ENCODE measurements at regions of chr19 and their contacts with region 1.

Region 1: GRCh38 chr19:14117668-14118164 is at the start of gene PRKACA:
- DNase-seq: peak; percentile 98
- ATAC-seq: peak; percentile 93
- H3K4me3 ChIP-seq: peak within 1 kb of the TSS; percentile 54 to 74 (median 66)
- H3K4me3 Mint-ChIP-seq: peak within 1 kb of the TSS; percentile 94
- H3K27ac ChIP-seq: peak within 1 kb of the TSS; percentile 24 to 77
- H3K27ac Mint-ChIP-seq: peak within 1 kb of the TSS; percentile 87
- H3K4me1 ChIP-seq: peaks cover 36 to 38% of the 10 kb centered on the region in 2 donors
- H3K4me1 Mint-ChIP-seq: peaks cover 39% of the 10 kb centered on the region
- H3K27me3 ChIP-seq: no peaks in the 10 kb centered on the region
- H3K27me3 Mint-ChIP-seq: no peaks in the 10 kb centered on the region
- CTCF ChIP-seq: no peak
- total RNA-seq, gene PRKACA: 43.0 and 48.8 TPM in 2 replicates

Region 2: GRCh38 chr19:13952154-13953035 is 165.3 kb before region 1 on chr19 and contains the start of gene DCAF15:
- CTCF ChIA-PET with region 1: no interaction called
- POLR2A ChIA-PET with region 1: no interaction called
- intact Hi-C with region 1: loop called (anchors 1 kb)
- DNase-seq: peak; percentile 100
- ATAC-seq: peak; percentile 95
- H3K4me3 ChIP-seq: peak within 1 kb of the TSS; percentile 55 to 98 (median 76)
- H3K4me3 Mint-ChIP-seq: peak within 1 kb of the TSS; percentile 96
- H3K27ac ChIP-seq: peak within 1 kb of the TSS; percentile 34 to 85
- H3K27ac Mint-ChIP-seq: peak within 1 kb of the TSS; percentile 96
- H3K4me1 ChIP-seq: peaks cover 15 to 18% of the 10 kb centered on the region in 2 donors
- H3K4me1 Mint-ChIP-seq: peaks cover 21% of the 10 kb centered on the region
- H3K27me3 ChIP-seq: no peaks in the 10 kb centered on the region
- H3K27me3 Mint-ChIP-seq: no peaks in the 10 kb centered on the region
- CTCF ChIP-seq: no peak
- total RNA-seq, gene DCAF15: 115 and 116 TPM in 2 replicates

Region 3: DNA sequence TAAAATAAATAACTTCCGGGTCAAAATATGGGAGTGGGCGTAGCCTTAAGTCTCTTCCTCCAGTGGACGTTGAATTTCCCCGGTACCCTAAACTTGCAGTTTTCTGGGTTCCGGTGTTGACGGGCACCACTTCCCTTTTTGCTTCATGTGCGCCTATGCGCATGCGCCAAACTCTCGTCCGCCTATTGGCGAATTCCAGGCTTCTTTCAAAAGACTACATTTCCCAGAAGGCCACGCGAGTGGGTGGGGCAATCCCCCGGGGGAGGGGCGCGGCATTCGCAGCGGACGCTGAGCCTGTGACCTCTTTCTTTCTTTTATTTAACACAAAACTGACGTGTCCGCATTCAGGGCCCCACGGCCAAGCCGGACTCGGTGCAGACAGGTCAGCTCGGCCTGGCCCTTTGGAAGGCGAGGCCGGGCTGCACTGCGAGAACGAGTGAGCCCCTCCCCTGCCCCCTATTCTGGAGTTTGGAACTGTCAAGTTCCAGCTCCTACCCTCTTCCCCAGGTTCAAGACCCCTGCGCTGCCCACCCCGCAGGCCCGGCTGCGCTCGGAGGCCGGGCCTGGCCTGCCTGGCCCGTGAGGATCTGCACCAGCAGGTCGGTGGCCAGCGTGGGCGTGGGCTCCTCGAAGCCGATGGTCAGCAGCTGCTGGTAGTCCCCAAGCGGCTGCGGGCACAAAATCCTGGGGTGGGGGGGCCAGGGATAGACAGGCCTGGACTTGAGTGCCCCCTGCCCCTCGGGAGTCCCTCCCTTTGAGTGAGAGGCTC is 36.2 kb before region 1 on chr19:
- CTCF ChIA-PET with region 1: interaction called, 3 read pairs
- POLR2A ChIA-PET with region 1: interaction called, 6 read pairs
- intact Hi-C with region 1: loop called (anchors 1 kb)
- DNase-seq: peak; percentile 99
- ATAC-seq: peak; percentile 91
- H3K4me3 ChIP-seq: peak overlapping the region; percentile 65 to 89 (median 77)
- H3K4me3 Mint-ChIP-seq: peak overlapping the region; percentile 96
- H3K27ac ChIP-seq: peak overlapping the region; percentile 72 to 89
- H3K27ac Mint-ChIP-seq: peak overlapping the region; percentile 96
- H3K4me1 ChIP-seq: peaks cover 14 to 18% of the 10 kb centered on the region in 2 donors
- H3K4me1 Mint-ChIP-seq: peaks cover 12% of the 10 kb centered on the region
- H3K27me3 ChIP-seq: no peaks in the 10 kb centered on the region
- H3K27me3 Mint-ChIP-seq: no peaks in the 10 kb centered on the region
- CTCF ChIP-seq: peak; percentile 10

Region 4: DNA sequence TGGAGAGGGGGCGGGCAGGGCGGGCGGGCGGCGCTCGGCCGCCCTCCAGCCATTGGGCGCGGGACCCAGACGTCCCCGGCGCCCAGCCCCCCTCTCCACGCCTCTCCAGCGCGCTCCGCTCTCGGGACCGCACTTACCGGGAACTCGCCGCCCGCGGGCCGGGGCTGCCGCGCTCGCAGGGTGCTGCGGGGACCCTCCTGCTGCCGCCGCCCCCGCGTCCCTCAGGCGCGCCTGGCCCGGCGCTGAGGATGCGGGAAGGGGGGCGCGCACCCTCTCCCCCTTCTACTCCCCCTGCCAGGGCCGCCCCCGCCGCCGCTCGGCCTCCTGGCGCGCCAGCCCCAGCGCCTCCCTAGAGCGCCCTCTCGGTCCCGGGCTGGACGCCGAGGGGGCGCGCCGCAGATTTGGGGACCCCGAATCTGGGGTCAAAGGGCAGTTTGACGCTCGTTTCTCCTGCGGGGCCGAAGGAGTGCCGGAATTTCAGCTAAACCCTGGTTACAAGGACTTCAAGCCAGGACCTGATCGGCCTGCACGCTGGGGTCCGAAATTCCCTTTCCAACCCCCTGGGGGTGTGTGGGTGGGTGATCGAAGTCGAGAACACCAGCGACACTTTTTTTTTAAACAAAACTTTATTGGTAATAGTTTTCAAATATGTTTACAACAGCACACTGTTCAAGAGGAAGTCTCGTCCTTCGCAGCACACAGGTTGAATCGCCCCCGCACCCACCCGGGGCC is 26.5 kb before region 1 on chr19:
- CTCF ChIA-PET with region 1: interaction called, 4 read pairs
- POLR2A ChIA-PET with region 1: interaction called, 5 read pairs
- intact Hi-C with region 1: loop called (anchors 1 kb)
- DNase-seq: peak; percentile 89
- ATAC-seq: peak; percentile 72
- H3K4me3 ChIP-seq: peak overlapping the region; percentile 81 to 89 (median 82)
- H3K4me3 Mint-ChIP-seq: peak overlapping the region; percentile 100
- H3K27ac ChIP-seq: peak overlapping the region; percentile 69 to 87
- H3K27ac Mint-ChIP-seq: peak overlapping the region; percentile 99
- H3K4me1 ChIP-seq: peaks cover 11 to 18% of the 10 kb centered on the region in 2 donors
- H3K4me1 Mint-ChIP-seq: peaks cover 15% of the 10 kb centered on the region
- H3K27me3 ChIP-seq: no peaks in the 10 kb centered on the region
- H3K27me3 Mint-ChIP-seq: no peaks in the 10 kb centered on the region
- CTCF ChIP-seq: peak; percentile 21

Region 5: GRCh38 chr19:14237014-14237941 is 119.6 kb after region 1 on chr19:
- CTCF ChIA-PET with region 1: no interaction called
- POLR2A ChIA-PET with region 1: no interaction called
- intact Hi-C with region 1: no loop called
- DNase-seq: no peak
- ATAC-seq: no peak
- H3K4me3 ChIP-seq: no peak overlapping the region
- H3K4me3 Mint-ChIP-seq: no peak overlapping the region
- H3K27ac ChIP-seq: no peak overlapping the region
- H3K27ac Mint-ChIP-seq: no peak overlapping the region
- H3K4me1 ChIP-seq: no peaks in the 10 kb centered on the region
- H3K4me1 Mint-ChIP-seq: no peaks in the 10 kb centered on the region
- H3K27me3 ChIP-seq: no peaks in the 10 kb centered on the region
- H3K27me3 Mint-ChIP-seq: no peaks in the 10 kb centered on the region
- CTCF ChIP-seq: no peak

Region 6: GRCh38 chr19:14432791-14433553 is 315.3 kb after region 1 on chr19 and contains the start of gene PKN1:
- CTCF ChIA-PET with region 1: no interaction called
- POLR2A ChIA-PET with region 1: no interaction called
- intact Hi-C with region 1: no loop called
- DNase-seq: peak; percentile 73
- ATAC-seq: peak; percentile 66
- H3K4me3 ChIP-seq: peak within 1 kb of the TSS; percentile 14 to 81 (median 77)
- H3K4me3 Mint-ChIP-seq: peak within 1 kb of the TSS; percentile 89
- H3K27ac ChIP-seq: peak within 1 kb of the TSS; percentile 76 to 86
- H3K27ac Mint-ChIP-seq: peak within 1 kb of the TSS; percentile 90
- H3K4me1 ChIP-seq: peaks cover 20 to 28% of the 10 kb centered on the region in 2 donors
- H3K4me1 Mint-ChIP-seq: peaks cover 31% of the 10 kb centered on the region
- H3K27me3 ChIP-seq: peaks cover 0 to 3% (median 0%) of the 10 kb centered on the region in 4 experiments
- H3K27me3 Mint-ChIP-seq: no peaks in the 10 kb centered on the region
- CTCF ChIP-seq: no peak
- total RNA-seq, gene PKN1: 170 and 171 TPM in 2 replicates

Measured in B cell (primary cell).